HEK293 (cell line): ENCODE measurements at regions of chr2 and their contacts with region 1.

Region 1: GRCh38 chr2:207746131-207746530 is 23.6 kb downstream of the FZD5 start:
- H3K4me3 ChIP-seq: no peak overlapping the region
- H3K27ac ChIP-seq: no peak overlapping the region
- H3K4me1 ChIP-seq: 0 out of 2 replicates have a peak, but pooled peaks cover 3% of the 10 kb centered on the region
- CTCF ChIP-seq: peak; percentile 83

Region 2: DNA sequence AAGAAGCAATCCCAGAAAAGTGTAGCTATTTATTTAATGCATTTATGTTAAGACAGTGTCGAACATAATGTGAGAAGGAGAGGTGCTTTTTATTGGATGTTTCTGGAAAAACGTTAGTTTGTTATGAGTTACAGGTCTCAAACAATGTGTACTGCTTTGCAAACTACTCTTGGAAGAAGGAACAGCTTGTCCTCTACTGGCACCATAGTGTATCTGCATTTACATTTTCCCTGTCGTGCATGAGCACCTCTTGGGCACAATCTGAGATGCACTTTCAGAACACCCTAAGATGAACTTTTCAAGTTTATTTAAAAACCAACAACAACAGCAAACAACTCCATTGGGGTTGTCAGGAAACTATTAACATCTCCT is 11.9 kb before region 1 on chr2:
- CTCF ChIA-PET with region 1: interaction called, 10 read pairs
- POLR2A ChIA-PET with region 1: no interaction called
- H3K4me3 ChIP-seq: no peak overlapping the region
- H3K27ac ChIP-seq: no peak overlapping the region
- H3K4me1 ChIP-seq: no peaks in the 10 kb centered on the region
- CTCF ChIP-seq: peak; percentile 72

Region 3: DNA sequence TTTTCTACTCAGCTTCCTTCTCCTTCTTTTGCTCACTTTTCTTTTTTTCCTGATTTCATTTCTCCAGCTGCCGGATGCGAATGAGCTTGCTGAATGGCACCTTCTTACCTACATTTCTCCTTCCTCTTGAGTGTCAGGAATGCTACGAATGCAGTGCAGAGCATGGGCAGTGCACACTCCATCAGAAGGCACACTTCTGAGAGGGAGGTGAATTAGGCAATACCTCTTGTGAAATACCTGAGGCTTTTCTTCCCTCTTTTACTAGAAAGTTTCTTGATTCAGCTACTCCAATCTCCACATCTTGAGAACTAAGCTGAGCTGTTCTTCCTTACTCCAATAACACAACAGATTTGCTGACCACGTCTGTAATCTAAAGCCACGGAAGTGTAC is 228.1 kb after region 1 on chr2:
- CTCF ChIA-PET with region 1: interaction called, 30 read pairs
- POLR2A ChIA-PET with region 1: interaction called, 3 read pairs
- H3K4me3 ChIP-seq: no peak overlapping the region
- H3K27ac ChIP-seq: no peak overlapping the region
- H3K4me1 ChIP-seq: peaks cover 14% of the 10 kb centered on the region
- CTCF ChIP-seq: no peak

Region 4: GRCh38 chr2:208025037-208025813 is 279.1 kb after region 1 on chr2 and contains the start of gene PLEKHM3:
- CTCF ChIA-PET with region 1: interaction called, 51 read pairs
- POLR2A ChIA-PET with region 1: interaction called, 5 read pairs
- H3K4me3 ChIP-seq: peak within 1 kb of the TSS; percentile 96
- H3K27ac ChIP-seq: peak within 1 kb of the TSS; percentile 53
- H3K4me1 ChIP-seq: peaks cover 15% of the 10 kb centered on the region
- CTCF ChIP-seq: peak; percentile 41; the same call in 1 of the 2 replicates

Region 5: GRCh38 chr2:208033758-208034502 is 287.8 kb after region 1 on chr2:
- CTCF ChIA-PET with region 1: interaction called, 119 read pairs
- POLR2A ChIA-PET with region 1: no interaction called
- H3K4me3 ChIP-seq: no peak overlapping the region
- H3K27ac ChIP-seq: no peak overlapping the region
- H3K4me1 ChIP-seq: no peaks in the 10 kb centered on the region
- CTCF ChIP-seq: no peak; the same call in 1 of the 2 replicates

Region 6: DNA sequence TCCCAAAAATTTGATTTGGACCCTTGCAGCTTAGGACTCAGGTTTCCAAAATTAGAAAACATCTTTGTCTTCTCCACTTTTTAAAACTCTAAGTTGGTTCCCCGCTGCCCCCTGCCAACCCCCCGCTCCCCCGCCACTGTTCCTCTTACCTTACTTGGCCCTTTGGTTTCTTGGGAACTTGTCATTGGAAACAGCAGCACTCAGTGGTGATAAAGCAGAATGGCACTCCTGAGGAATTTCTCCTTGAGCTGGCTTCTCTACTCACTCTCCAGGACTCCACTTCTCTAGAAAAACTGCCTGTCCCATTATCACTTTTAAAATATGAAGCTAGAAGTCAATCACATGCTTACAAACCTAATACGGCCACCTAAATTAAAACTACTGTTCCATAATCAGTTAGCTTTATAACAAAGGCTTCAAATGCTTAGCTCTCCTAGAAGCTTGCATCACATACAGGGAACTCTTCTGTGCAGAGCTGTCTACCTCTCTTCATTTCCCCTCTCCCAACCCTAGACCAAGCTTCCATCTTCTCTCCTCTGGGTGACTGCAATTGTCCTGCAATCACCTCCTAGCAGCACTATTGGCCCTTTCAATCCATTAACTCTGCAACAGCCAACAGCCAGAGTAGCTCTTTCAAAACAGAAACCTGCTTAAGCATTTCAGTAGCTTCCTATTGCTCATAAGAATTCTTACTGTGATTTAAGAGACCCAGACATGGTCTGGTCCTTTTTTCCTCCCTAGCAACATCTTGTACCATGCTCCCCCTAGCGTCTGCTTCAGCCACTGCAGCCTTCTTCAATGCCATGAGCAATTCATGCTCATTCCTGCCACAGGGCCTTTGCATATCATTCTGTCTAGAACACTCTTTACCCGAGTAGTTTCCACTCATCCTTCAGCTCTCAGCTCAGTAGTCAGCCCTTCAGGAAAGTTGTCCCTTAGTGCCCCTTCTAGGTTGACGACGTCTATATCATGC is 294.4 kb after region 1 on chr2:
- CTCF ChIA-PET with region 1: interaction called, 119 read pairs
- POLR2A ChIA-PET with region 1: no interaction called
- H3K4me3 ChIP-seq: no peak overlapping the region
- H3K27ac ChIP-seq: no peak overlapping the region
- H3K4me1 ChIP-seq: no peaks in the 10 kb centered on the region
- CTCF ChIP-seq: peak; percentile 70

Region 7: DNA sequence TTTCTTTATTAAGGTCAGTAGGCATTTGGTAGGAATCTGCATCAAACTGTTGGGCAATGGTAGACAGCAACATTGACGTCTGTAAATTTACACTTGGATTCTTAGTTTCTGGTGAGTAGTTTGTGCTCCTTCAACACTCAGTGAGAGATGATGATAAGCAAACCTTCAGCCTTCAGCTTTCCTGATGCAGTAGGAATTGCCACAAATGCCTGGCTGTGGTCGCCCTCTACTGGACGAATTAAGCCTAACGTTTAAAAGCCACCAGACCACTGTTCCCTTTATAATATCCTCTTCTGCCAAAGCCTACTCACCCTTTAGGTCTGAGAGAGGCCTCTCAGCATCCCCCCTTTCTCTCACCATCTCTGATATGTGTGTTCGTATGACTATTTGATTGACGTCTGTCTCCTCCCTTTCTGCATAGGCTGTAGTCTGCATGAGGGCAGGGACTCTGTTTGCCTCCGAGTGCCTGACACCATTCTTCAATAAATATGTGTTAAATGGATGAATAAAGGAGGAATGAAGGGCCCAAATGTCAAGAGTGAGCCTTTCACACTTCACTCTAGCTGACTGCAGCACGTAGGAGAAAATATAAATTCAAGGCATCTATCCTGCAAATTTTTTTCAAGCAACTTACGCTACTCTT is 326.2 kb after region 1 on chr2:
- CTCF ChIA-PET with region 1: interaction called, 48 read pairs
- POLR2A ChIA-PET with region 1: interaction called, 3 read pairs
- H3K4me3 ChIP-seq: no peak overlapping the region
- H3K27ac ChIP-seq: no peak overlapping the region
- H3K4me1 ChIP-seq: no peaks in the 10 kb centered on the region
- CTCF ChIP-seq: peak; percentile 76